Panc1 (cell line): ENCODE measurements at regions of chr7 and their contacts with region 1.

Region 1: DNA sequence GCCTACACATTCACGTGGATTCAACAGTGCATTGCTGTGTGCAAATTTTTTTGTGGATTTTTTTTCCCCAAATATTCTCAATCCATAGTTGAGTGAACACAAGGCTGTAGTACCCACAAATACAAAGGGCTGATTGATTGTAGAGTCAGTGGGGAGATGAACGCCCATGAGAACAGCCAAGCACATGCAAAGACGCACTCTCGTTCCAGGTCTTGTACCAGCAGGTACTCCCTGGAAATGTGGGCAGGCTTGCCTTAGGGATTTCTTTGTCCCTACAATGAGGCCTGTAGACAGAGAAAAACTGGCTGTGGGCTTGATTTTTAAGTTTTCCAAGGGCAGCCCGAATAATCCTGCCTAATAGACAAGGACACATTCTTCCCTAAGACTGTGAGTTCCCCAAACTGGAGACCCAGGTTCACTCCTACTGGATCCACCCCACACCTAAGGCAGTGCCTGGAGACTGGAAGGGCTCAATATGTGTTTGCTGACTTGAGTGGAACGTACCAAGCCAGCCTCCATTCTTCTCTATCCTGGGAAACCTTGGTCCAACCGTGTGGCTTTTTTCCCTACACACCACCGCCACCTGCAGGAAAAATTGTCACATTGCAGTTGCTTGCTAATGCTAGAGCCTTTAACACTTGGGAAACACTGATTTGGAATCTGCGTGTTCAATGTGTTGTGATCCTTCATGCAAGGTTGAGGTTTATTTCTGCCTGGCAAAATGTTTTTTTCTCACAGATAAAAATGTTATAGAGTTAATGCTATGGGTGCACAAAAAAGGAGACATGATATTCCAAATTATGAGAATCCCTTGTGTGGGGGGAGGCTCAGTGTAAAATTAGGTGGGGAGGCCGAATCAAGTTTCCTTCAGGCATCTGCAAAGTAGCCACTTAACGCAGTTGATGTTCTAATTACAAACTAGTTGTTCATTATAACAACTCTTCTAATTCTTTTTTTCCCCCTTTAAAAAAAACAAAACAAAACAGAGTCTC is 49.3 kb downstream of the PPP1R17 start:
- DNase-seq: peak; percentile 41
- ATAC-seq: peak; percentile 92
- H3K4me3 ChIP-seq: no peak overlapping the region
- H3K27ac ChIP-seq: no peak overlapping the region
- H3K4me1 ChIP-seq: no peaks in the 10 kb centered on the region
- H3K27me3 ChIP-seq: peaks cover 3% of the 10 kb centered on the region; the same call in 1 of the 2 replicates
- CTCF ChIP-seq: peak; percentile 92

Region 2: GRCh38 chr7:31373337-31374289 is 362.7 kb before region 1 on chr7:
- CTCF ChIA-PET with region 1: no interaction called
- POLR2A ChIA-PET with region 1: no interaction called
- in situ Hi-C with region 1: no loop called
- intact Hi-C with region 1: loop called (anchors 2 kb)
- DNase-seq: peak; percentile 61
- ATAC-seq: peak; percentile 93
- H3K4me3 ChIP-seq: no peak overlapping the region
- H3K27ac ChIP-seq: no peak overlapping the region
- H3K4me1 ChIP-seq: no peaks in the 10 kb centered on the region
- H3K27me3 ChIP-seq: peaks cover 12% of the 10 kb centered on the region
- CTCF ChIP-seq: peak; percentile 84

Region 3: GRCh38 chr7:31443457-31443856 is 292.8 kb before region 1 on chr7:
- CTCF ChIA-PET with region 1: no interaction called
- POLR2A ChIA-PET with region 1: no interaction called
- in situ Hi-C with region 1: no loop called
- intact Hi-C with region 1: loop called (anchors 1 kb)
- DNase-seq: peak; percentile 30
- ATAC-seq: peak; percentile 84
- H3K4me3 ChIP-seq: no peak overlapping the region
- H3K27ac ChIP-seq: no peak overlapping the region
- H3K4me1 ChIP-seq: no peaks in the 10 kb centered on the region
- H3K27me3 ChIP-seq: peaks cover 2% of the 10 kb centered on the region; the same call in 1 of the 2 replicates
- CTCF ChIP-seq: peak; percentile 87

Region 4: DNA sequence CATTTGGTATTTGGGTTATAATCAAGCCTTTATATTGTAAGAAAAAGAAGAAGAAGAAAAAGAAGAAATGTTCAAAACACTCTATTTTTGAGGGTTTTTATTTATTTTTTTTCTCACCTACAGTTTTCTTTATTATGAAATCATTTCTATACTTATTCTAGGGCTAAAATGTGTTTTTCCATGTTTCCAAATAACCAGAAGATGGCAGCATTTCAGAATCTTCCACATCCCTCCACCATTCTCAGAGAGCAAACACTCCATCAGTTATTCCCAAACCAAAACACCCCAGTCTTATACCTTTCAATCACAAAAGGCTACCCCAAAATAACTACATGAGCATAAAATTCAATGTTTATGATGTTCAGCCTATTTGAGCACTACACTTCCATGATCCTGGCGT is 88.0 kb before region 1 on chr7:
- CTCF ChIA-PET with region 1: no interaction called
- POLR2A ChIA-PET with region 1: no interaction called
- in situ Hi-C with region 1: no loop called
- intact Hi-C with region 1: loop called (anchors 1 kb)
- DNase-seq: no peak
- ATAC-seq: no peak
- H3K4me3 ChIP-seq: no peak overlapping the region
- H3K27ac ChIP-seq: no peak overlapping the region
- H3K4me1 ChIP-seq: no peaks in the 10 kb centered on the region
- H3K27me3 ChIP-seq: no peaks in the 10 kb centered on the region
- CTCF ChIP-seq: 0 out of 2 replicates have a peak, but pooled peaks have one; percentile 5